Calu3 (cell line): ENCODE measurements at regions of chr3 and their contacts with region 1.

Region 1: DNA sequence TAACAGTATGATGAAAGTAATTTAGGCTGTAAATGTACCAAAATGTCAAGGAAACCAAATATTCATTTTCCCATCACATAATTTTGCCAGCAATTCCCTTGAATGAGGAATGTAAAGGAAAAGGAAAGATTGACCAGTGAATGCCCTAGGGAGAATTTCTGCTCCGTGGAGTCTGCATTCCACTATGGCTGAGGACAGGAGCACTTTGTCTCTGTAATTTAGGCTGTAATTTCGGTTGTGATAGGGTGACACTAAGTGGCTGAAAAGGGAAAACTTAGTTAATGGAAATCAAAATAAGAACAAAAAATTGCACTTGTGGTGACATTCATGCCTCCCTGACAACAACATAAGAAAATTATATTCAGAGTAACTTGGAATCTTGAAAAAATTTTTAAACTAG is 8.3 kb upstream of the TMEM207 start:
- DNase-seq: peak; percentile 48
- H3K4me3 Mint-ChIP-seq: peak overlapping the region; percentile 60
- H3K27ac Mint-ChIP-seq: peak overlapping the region; percentile 80
- H3K4me1 Mint-ChIP-seq: peaks cover 45% of the 10 kb centered on the region
- H3K27me3 Mint-ChIP-seq: no peaks in the 10 kb centered on the region
- CTCF ChIP-seq: no peak

Region 2: DNA sequence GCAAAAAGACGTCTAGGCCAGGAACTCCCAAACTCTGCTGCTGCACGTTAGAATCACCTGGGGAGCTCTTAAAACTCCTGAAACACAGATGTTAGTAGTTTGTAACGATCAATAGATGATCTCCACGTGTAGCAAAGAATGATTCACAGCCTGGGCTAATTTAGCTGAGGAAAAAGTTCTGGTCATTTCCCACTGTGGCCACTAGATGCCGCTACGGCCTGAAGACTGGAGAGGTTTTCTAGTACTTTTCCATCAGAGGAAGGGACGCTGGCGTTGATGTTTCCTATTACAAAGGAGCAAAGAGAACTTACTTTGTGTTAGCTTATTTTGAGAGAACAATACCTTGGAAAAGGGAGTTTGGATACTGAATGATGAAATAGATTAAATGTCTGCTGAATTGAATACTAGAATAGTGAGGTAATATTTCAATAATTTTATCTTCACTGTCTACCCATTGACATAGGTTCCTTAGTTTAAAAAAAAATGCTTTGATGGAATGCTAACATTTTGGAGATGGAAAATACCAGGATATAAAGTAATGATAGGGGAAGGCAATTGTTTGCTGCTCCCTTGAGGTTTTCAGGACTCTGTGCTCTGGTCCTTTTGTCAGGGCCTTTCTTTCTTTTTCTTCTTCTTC is 496.4 kb before region 1 on chr3:
- CTCF ChIA-PET with region 1: no interaction called
- intact Hi-C with region 1: loop called (anchors 5 kb)
- DNase-seq: peak; percentile 91
- H3K4me3 Mint-ChIP-seq: no peak overlapping the region
- H3K27ac Mint-ChIP-seq: no peak overlapping the region
- H3K4me1 Mint-ChIP-seq: peaks cover 11% of the 10 kb centered on the region
- H3K27me3 Mint-ChIP-seq: no peaks in the 10 kb centered on the region
- CTCF ChIP-seq: peak; percentile 90

Region 3: DNA sequence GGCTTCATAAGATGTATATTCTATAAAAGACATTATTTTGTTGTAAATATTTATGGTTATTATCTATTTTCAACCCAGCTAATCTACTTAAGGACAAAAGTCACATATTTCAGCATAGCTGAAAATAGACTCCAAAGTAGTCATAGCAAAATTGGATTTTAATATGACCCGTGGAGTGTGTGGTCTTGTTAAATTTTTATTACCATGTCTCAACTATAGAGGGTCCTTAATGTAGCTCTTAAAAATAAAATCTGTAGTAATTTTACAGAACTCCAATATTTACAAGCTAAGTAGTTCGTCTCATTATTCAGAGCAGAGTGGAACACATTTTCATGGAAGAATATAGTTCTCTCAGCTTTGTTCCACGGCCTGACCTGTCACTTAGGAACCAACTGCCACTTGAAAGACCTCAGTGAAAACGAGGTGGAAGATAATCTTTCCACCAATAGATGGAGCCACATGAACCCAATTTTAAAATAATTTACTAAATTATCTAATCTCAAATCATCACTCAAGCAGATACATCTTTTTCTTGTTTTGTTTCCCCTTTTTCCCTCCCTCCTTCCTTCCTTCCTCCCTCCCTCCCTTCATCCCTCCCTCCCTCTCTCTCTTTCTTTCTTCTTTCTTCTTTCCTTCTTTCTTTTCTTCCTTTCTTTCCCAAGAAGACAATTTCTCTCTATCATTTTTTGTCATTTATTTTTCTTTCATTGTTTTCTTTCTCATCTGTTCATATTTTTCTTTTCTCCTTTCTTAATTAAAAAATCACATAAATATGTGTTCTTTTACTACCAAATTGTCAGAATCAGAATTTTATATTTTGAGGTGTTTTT is 233.0 kb before region 1 on chr3:
- CTCF ChIA-PET with region 1: no interaction called
- intact Hi-C with region 1: loop called (anchors 5 kb)
- DNase-seq: peak; percentile 37
- H3K4me3 Mint-ChIP-seq: no peak overlapping the region
- H3K27ac Mint-ChIP-seq: no peak overlapping the region
- H3K4me1 Mint-ChIP-seq: peaks cover 7% of the 10 kb centered on the region
- H3K27me3 Mint-ChIP-seq: no peaks in the 10 kb centered on the region
- CTCF ChIP-seq: peak; percentile 58

Region 4: DNA sequence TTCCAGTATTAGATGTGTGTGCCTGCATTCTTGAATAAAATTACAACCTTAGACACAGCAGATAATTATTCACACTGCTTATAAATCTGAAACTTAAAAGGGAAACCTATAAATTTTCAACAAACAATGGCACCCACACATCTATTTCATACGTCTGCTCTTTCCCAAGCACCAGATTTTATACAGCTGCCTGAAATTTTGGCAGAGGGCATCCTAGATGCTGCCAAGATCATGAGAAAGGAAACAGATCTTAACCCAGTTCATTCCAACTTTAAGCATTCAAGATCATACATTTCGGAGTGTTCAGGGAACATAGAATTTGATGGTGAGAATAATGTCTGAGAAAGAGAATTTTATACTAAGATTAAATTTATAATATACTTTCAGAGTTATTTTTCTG is 188.9 kb before region 1 on chr3:
- CTCF ChIA-PET with region 1: no interaction called
- intact Hi-C with region 1: no loop called
- DNase-seq: no peak
- H3K4me3 Mint-ChIP-seq: no peak overlapping the region
- H3K27ac Mint-ChIP-seq: no peak overlapping the region
- H3K4me1 Mint-ChIP-seq: peaks cover 34% of the 10 kb centered on the region
- H3K27me3 Mint-ChIP-seq: no peaks in the 10 kb centered on the region
- CTCF ChIP-seq: no peak

Region 5: GRCh38 chr3:190414297-190414696 is 43.7 kb before region 1 on chr3:
- CTCF ChIA-PET with region 1: no interaction called
- intact Hi-C with region 1: no loop called
- DNase-seq: no peak
- H3K4me3 Mint-ChIP-seq: no peak overlapping the region
- H3K27ac Mint-ChIP-seq: no peak overlapping the region
- H3K4me1 Mint-ChIP-seq: no peaks in the 10 kb centered on the region
- H3K27me3 Mint-ChIP-seq: no peaks in the 10 kb centered on the region
- CTCF ChIP-seq: no peak

Region 6: DNA sequence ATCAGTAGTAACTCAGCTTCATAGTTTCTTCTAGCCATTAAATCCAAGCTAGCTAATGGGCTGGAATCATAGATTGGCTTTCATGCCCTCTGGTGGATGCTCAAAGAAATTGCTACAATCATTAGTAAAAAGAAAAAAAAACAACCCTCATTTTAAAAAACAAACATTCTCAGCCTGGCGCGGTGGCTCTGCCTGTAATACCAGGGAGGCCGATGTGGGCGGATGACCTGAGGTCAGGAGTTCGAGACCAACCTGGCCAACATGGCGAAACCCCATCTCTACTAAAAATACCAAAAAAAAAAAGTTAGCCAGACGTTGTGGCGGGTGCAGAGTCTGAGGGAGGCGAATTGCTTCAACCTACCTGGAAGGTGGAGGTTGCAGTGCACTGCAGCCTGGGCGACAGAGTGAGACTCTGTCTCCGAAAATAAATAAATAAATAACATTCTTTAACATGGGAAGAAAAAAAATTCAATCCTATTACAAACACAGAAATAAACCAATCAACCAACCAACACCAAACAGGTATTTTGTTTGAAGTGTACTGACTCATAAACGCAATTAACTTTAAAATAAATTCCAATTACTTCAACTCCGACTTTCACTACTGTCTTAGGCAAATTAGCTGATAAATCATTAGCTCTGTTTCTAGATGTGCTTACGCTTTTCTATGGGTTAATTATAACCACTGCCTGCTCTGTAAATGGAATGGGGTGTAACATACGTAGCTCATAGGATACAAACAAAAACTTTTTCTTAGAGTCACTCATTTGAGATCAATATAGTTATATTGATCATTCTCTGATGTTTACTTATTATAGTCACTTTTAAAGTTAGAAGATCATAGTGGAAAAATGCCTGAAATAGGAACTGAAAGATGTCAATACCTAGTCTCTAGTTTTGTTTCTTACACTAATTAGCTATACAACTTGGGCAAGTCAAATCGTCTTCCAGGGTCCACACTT is 33.3 kb before region 1 on chr3:
- CTCF ChIA-PET with region 1: no interaction called
- intact Hi-C with region 1: loop called (anchors 1 kb)
- DNase-seq: peak; percentile 86
- H3K4me3 Mint-ChIP-seq: peak overlapping the region; percentile 44
- H3K27ac Mint-ChIP-seq: peak overlapping the region; percentile 94
- H3K4me1 Mint-ChIP-seq: peaks cover 12% of the 10 kb centered on the region
- H3K27me3 Mint-ChIP-seq: no peaks in the 10 kb centered on the region
- CTCF ChIP-seq: peak; percentile 69

Region 7: DNA sequence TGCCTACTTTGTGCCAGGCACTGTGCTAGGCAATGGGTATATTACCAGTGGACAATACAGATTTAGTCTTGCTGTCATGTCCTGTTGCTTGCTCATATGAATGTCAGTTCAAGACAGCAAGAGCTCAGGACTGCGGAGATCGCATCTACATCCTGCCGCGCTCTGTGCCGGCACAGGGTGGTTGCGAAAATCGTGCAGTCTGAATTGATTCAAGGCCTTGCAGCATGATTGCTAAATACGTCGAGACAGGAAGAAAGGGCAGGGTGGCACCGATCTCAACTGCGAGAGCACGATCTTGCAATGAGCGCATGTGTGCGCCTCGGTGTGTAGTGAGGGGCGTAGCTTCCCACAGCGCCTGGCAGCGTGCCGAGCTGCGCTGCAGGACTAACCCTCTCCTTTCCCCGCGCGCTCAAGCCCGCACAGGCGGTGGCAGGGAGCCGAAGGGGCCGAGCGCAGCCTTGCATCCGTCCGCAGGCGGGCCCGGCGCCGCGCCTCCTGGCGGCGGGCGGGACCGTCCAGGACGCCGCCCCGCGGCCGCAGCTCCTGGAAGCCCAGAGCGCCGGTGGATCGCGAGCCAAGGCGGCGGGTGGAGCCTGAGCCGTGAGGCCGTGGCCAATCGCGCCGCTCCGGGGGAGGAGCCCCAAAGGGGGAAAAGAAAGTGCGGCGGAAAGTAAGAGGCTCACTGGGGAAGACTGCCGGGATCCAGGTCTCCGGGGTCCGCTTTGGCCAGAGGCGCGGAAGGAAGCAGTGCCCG is 55.5 kb after region 1 on chr3 and contains the start of gene IL1RAP:
- CTCF ChIA-PET with region 1: interaction called, 3 read pairs
- intact Hi-C with region 1: loop called (anchors 1 kb)
- DNase-seq: peak; percentile 98
- H3K4me3 Mint-ChIP-seq: peak within 1 kb of the TSS; percentile 90
- H3K27ac Mint-ChIP-seq: peak within 1 kb of the TSS; percentile 90
- H3K4me1 Mint-ChIP-seq: peaks cover 38% of the 10 kb centered on the region
- H3K27me3 Mint-ChIP-seq: no peaks in the 10 kb centered on the region
- CTCF ChIP-seq: peak; percentile 92
- total RNA-seq, gene IL1RAP: 186 and 239 TPM in 2 replicates

Region 8: DNA sequence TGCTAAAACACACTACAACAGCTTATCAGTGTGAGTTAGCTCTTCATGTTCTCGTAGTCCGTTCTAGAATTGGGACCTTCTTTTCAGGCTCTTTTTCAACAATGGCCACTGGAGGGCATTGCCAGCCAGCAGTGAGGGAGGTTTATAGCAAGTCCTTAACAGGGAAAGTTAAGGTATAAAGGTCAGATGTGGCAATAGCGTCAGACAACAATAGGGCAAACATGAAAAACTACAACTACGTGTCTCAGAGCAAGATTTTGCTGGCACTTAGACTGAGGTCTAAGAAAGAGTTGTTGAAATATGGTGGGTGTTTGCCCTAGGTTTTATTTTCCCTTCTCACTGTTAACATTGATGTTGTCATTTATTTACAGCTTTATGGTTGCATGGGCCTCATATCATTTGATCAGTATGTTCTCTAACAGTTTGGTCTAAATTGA is 243.1 kb after region 1 on chr3:
- CTCF ChIA-PET with region 1: no interaction called
- intact Hi-C with region 1: loop called (anchors 2 kb)
- DNase-seq: peak; percentile 81
- H3K4me3 Mint-ChIP-seq: no peak overlapping the region
- H3K27ac Mint-ChIP-seq: peak overlapping the region; percentile 33
- H3K4me1 Mint-ChIP-seq: peaks cover 43% of the 10 kb centered on the region
- H3K27me3 Mint-ChIP-seq: no peaks in the 10 kb centered on the region
- CTCF ChIP-seq: peak; percentile 85

Region 9: GRCh38 chr3:191441687-191442086 is 983.6 kb after region 1 on chr3:
- CTCF ChIA-PET with region 1: no interaction called
- intact Hi-C with region 1: no loop called
- DNase-seq: no peak
- H3K4me3 Mint-ChIP-seq: no peak overlapping the region
- H3K27ac Mint-ChIP-seq: no peak overlapping the region
- H3K4me1 Mint-ChIP-seq: no peaks in the 10 kb centered on the region
- H3K27me3 Mint-ChIP-seq: no peaks in the 10 kb centered on the region
- CTCF ChIP-seq: no peak